PC-3 (cell line): ENCODE measurements at regions of chr3 and their contacts with region 1.

Region 1: GRCh38 chr3:162367429-162368260 is 871.0 kb downstream of the OTOL1 start:
- DNase-seq: peak; percentile 77
- ATAC-seq: peak; percentile 41
- H3K4me3 ChIP-seq: no peak overlapping the region
- H3K27ac ChIP-seq: peak overlapping the region; percentile 29
- H3K4me1 ChIP-seq: peaks cover 32% of the 10 kb centered on the region
- H3K27me3 ChIP-seq: no peaks in the 10 kb centered on the region
- CTCF ChIP-seq: no peak

Region 2: GRCh38 chr3:162141272-162141791 is 226.3 kb before region 1 on chr3:
- CTCF ChIA-PET with region 1: no interaction called
- POLR2A ChIA-PET with region 1: no interaction called
- intact Hi-C with region 1: loop called (anchors 10 kb)
- DNase-seq: peak; percentile 68
- ATAC-seq: peak; percentile 41
- H3K4me3 ChIP-seq: no peak overlapping the region
- H3K27ac ChIP-seq: no peak overlapping the region
- H3K4me1 ChIP-seq: peaks cover 28% of the 10 kb centered on the region
- H3K27me3 ChIP-seq: no peaks in the 10 kb centered on the region
- CTCF ChIP-seq: no peak

Region 3: GRCh38 chr3:162418153-162418552 is 50.5 kb after region 1 on chr3:
- CTCF ChIA-PET with region 1: no interaction called
- POLR2A ChIA-PET with region 1: no interaction called
- intact Hi-C with region 1: no loop called
- DNase-seq: no peak
- ATAC-seq: no peak
- H3K4me3 ChIP-seq: no peak overlapping the region
- H3K27ac ChIP-seq: no peak overlapping the region
- H3K4me1 ChIP-seq: no peaks in the 10 kb centered on the region
- H3K27me3 ChIP-seq: no peaks in the 10 kb centered on the region
- CTCF ChIP-seq: no peak